Left lung (tissue), 14 donors: ENCODE measurements at regions of chr6 and their contacts with region 1.

Region 1: GRCh38 chr6:83057705-83058321 is 7.8 kb downstream of the UBE3D start:
- DNase-seq: peak in 2 of 4 donors; percentile 17 to 54
- ATAC-seq: peak; percentile 86
- H3K4me3 ChIP-seq: no peak overlapping the region
- H3K27ac ChIP-seq: no peak overlapping the region
- H3K4me1 ChIP-seq: no peaks in the 10 kb centered on the region
- H3K27me3 ChIP-seq: no peaks in the 10 kb centered on the region
- CTCF ChIP-seq: peak; percentile 57

Region 2: GRCh38 chr6:82251942-82252341 is 805.9 kb before region 1 on chr6:
- intact Hi-C with region 1: loop called in 1 of 2 experiments (anchors 5 kb)
- DNase-seq: peak in 1 of 4 donors; percentile 30
- ATAC-seq: no peak
- H3K4me3 ChIP-seq: no peak overlapping the region
- H3K27ac ChIP-seq: no peak overlapping the region
- H3K4me1 ChIP-seq: peaks cover 6 to 10% of the 10 kb centered on the region in 2 donors
- H3K27me3 ChIP-seq: no peaks in the 10 kb centered on the region
- CTCF ChIP-seq: peak; percentile 37 to 40

Region 3: GRCh38 chr6:83202046-83202445 is 144.2 kb after region 1 on chr6:
- intact Hi-C with region 1: no loop called
- DNase-seq: no peak
- ATAC-seq: no peak
- H3K4me3 ChIP-seq: no peak overlapping the region
- H3K27ac ChIP-seq: no peak overlapping the region
- H3K4me1 ChIP-seq: no peaks in the 10 kb centered on the region
- H3K27me3 ChIP-seq: no peaks in the 10 kb centered on the region
- CTCF ChIP-seq: no peak